ENCODE measurements at regions of chr1 and their contacts with region 1.

Region 1: DNA sequence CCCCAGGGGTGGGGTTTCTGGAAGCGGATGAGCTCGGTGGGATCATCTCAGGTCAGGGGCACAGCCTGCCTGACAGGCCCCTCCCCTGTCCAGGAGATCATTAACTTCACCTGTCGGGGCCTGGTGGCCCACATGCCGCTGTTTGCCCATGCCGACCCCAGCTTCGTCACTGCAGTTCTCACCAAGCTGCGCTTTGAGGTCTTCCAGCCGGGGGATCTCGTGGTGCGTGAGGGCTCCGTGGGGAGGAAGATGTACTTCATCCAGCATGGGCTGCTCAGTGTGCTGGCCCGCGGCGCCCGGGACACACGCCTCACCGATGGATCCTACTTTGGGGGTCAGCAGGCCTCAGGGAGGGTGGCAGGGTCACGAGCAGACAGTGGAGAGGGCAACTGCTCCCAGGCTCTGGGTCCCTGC is 8.4 kb downstream of the HCN3 start:
- DNase-seq: no peak
- ATAC-seq: peak; percentile 53
- H3K4me3 ChIP-seq: peak overlapping the region in 1 of 3 experiments; percentile 30; a peak in 2 of 6 replicates
- H3K27ac ChIP-seq: peak overlapping the region; percentile 73
- H3K4me1 ChIP-seq: peaks cover 40% of the 10 kb centered on the region
- H3K27me3 ChIP-seq: no peaks in the 10 kb centered on the region
- CTCF ChIP-seq: no peak
- EP300 ChIP-seq: no peak
- POLR2A ChIP-seq: peak; percentile 15 to 45; a peak in 2 of 4 replicates
- RAD21 ChIP-seq: no peak

Region 2: GRCh38 chr1:155300553-155301329 is 15.1 kb after region 1 on chr1:
- CTCF ChIA-PET with region 1: no interaction called
- POLR2A ChIA-PET with region 1: interaction called, 17 read pairs
- in situ Hi-C with region 1: no loop called
- intact Hi-C with region 1: no loop called
- DNase-seq: peak; percentile 77
- ATAC-seq: peak; percentile 94
- H3K4me3 ChIP-seq: peak overlapping the region; percentile 28 to 69 (median 44); a peak in 5 of 6 replicates
- H3K27ac ChIP-seq: peak overlapping the region; percentile 95
- H3K4me1 ChIP-seq: peaks cover 74% of the 10 kb centered on the region
- H3K27me3 ChIP-seq: no peaks in the 10 kb centered on the region; a peak in 1 of 5 replicates
- CTCF ChIP-seq: peak; percentile 32
- EP300 ChIP-seq: peak in 1 of 2 experiments; percentile 70; a peak in 2 of 4 replicates
- POLR2A ChIP-seq: peak; percentile 49 to 93; a peak in 3 of 4 replicates
- RAD21 ChIP-seq: peak; percentile 49

Region 3: DNA sequence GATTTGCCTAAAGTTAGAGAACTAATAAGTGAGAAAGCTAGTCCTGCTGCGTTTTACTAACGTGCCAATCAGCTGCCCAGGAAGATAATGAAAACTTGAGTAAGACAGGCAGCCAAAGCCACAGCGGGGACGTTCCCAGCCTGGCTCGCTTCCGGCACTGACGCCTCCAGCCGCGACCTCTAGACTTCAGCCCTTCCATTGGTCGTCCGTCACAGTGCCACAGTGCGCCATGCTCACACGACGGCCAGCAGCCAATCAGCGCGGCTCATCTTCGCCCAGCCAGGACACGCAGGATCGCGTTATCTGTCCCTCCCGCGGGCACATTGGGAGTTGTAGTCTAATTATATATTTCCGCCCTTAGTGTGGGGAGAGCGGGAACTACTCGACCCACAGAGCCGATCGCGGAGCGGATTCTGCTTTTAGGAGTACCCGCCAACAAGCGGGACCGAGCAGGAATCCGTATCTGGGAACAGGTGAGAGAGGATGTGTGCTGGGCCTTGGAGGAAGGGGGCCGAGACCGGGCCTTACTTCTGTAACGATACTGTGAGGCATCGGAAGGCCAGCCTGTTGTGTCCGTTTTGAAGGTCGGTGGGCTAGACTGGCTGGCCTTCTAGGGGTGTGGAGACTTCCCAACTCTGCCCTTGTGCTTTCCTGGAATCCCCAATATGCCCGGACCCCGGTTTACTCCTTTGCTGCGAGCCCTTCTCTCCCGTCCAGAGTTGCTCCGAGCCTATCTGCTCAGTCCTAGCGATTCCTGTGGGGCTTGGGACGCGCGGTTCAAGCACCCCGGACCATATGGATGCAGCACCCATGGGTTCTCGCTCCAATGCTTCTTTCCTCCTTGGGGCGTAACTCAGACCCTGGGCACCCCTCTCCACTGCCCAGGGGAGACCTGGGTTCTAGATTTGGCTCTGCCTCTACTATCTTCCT is 23.1 kb after region 1 on chr1 and contains the start of gene FDPS:
- CTCF ChIA-PET with region 1: no interaction called
- POLR2A ChIA-PET with region 1: interaction called, 13 read pairs
- in situ Hi-C with region 1: no loop called
- intact Hi-C with region 1: no loop called
- DNase-seq: peak; percentile 97
- ATAC-seq: peak; percentile 92
- H3K4me3 ChIP-seq: peak within 1 kb of the TSS; percentile 92 to 95 (median 94)
- H3K27ac ChIP-seq: peak within 1 kb of the TSS; percentile 83
- H3K4me1 ChIP-seq: peaks cover 84% of the 10 kb centered on the region
- H3K27me3 ChIP-seq: no peaks in the 10 kb centered on the region; a peak in 1 of 5 replicates
- CTCF ChIP-seq: no peak; the same call in 1 of the 2 replicates
- EP300 ChIP-seq: peak in 1 of 2 experiments; percentile 57; a peak in 2 of 4 replicates
- POLR2A ChIP-seq: peak; percentile 71 to 84
- RAD21 ChIP-seq: 0 out of 2 replicates have a peak, but pooled peaks have one; percentile 22
- total RNA-seq, gene FDPS: 519 and 610 TPM in 2 replicates

Region 4: DNA sequence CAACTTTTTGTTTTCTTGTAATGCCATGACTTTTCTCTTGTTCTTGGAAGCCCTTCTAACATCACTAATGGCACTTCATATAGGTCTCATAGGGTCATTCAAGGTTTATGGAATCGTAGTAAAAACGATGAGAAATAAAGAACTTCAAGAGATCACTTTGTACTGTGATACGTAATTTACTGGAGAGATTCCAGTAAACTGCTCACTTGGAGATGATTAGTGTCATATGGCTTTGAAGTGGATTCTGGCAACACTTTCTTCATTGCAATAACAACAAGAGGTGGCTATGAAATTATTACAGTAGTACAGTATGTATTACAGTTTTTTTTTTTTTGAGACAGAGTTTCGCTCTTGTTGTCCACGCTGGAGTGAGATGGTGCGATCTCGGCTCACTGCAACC is 138.5 kb after region 1 on chr1:
- CTCF ChIA-PET with region 1: no interaction called
- POLR2A ChIA-PET with region 1: no interaction called
- in situ Hi-C with region 1: no loop called
- intact Hi-C with region 1: no loop called
- DNase-seq: no peak
- ATAC-seq: no peak
- H3K4me3 ChIP-seq: no peak overlapping the region
- H3K27ac ChIP-seq: no peak overlapping the region
- H3K4me1 ChIP-seq: no peaks in the 10 kb centered on the region
- H3K27me3 ChIP-seq: no peaks in the 10 kb centered on the region
- CTCF ChIP-seq: no peak
- EP300 ChIP-seq: no peak
- POLR2A ChIP-seq: no peak
- RAD21 ChIP-seq: no peak